Activated CD8-positive, alpha-beta memory T cell treated with anti-CD3 and anti-CD28 coated beads, Interleukin-2, amount 10 ng/mL, durations not matched to agents 7 days and 5 days (primary cell): ENCODE measurements at regions of chr15 and their contacts with region 1.

Region 1: DNA sequence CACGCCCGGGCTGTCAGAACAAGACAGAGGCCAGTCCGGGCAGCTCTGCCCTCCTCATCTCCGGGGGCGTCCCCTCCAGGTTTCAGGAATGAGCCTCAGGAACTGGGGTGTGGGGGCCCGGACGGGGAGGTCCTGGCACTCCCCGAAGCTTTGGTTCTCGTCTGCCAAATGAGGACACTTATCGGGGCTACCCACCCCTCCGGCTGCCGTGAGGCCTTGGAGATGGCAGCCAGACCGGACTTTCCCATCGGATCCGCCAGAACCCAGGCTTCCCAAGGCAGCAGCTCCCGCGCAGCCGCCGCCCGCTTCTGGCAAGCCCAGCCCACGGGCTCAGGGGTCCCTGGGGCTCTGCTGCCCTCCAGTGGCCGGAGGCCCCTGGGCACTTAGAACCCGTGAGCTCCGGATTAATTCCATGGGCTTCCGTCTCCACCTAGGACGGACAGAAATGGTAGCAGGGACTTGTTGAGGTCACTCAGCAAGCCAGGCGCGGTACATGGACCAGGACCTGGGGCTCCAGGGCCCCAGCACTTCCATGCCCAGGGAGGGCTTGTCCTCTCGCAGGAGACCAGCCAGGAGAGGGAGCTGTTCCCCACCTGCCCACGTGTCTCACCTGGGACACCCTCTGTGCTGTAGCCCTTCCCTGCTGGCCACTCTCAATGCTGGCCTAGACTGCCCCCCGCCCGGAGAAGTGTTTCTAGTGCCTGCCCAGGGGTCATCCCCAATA is 89.4 kb downstream of the LINGO1 start:
- DNase-seq: peak; percentile 83
- ATAC-seq: peak; percentile 93
- H3K4me3 Mint-ChIP-seq: peak overlapping the region; percentile 68
- H3K27ac Mint-ChIP-seq: no peak overlapping the region
- H3K4me1 Mint-ChIP-seq: peaks cover 16% of the 10 kb centered on the region
- H3K27me3 Mint-ChIP-seq: peaks cover 1% of the 10 kb centered on the region

Region 2: DNA sequence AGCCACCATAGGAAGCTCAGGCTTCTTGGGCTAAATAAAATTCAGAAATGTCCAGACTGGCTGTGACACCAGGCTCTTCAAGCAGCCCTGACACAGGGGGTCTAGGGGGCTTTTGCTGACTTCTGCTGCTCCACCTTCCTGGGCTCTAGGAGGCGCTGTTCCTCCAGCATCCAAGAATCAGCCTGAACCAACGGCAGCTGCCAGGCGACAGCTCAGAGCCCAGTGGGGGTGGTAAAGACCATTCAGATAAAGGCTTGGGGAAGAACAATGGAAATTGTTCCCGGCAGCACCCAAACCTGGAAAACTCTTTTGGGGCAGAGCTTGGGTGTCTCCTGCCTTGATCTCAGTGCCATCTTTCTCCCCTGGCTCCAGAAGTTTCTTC is 570.0 kb before region 1 on chr15:
- CTCF ChIA-PET with region 1: interaction called, 36 read pairs
- DNase-seq: peak; percentile 81
- ATAC-seq: peak; percentile 71
- H3K4me3 Mint-ChIP-seq: no peak overlapping the region
- H3K27ac Mint-ChIP-seq: no peak overlapping the region
- H3K4me1 Mint-ChIP-seq: peaks cover 34% of the 10 kb centered on the region
- H3K27me3 Mint-ChIP-seq: no peaks in the 10 kb centered on the region

Region 3: GRCh38 chr15:77107531-77108355 is 435.6 kb before region 1 on chr15:
- CTCF ChIA-PET with region 1: interaction called, 50 read pairs
- DNase-seq: peak; percentile 66
- ATAC-seq: peak; percentile 69
- H3K4me3 Mint-ChIP-seq: no peak overlapping the region
- H3K27ac Mint-ChIP-seq: no peak overlapping the region
- H3K4me1 Mint-ChIP-seq: no peaks in the 10 kb centered on the region
- H3K27me3 Mint-ChIP-seq: no peaks in the 10 kb centered on the region

Region 4: GRCh38 chr15:77126529-77127326 is 416.6 kb before region 1 on chr15:
- CTCF ChIA-PET with region 1: interaction called, 12 read pairs
- DNase-seq: no peak
- ATAC-seq: no peak
- H3K4me3 Mint-ChIP-seq: no peak overlapping the region
- H3K27ac Mint-ChIP-seq: no peak overlapping the region
- H3K4me1 Mint-ChIP-seq: peaks cover 10% of the 10 kb centered on the region
- H3K27me3 Mint-ChIP-seq: no peaks in the 10 kb centered on the region

Region 5: DNA sequence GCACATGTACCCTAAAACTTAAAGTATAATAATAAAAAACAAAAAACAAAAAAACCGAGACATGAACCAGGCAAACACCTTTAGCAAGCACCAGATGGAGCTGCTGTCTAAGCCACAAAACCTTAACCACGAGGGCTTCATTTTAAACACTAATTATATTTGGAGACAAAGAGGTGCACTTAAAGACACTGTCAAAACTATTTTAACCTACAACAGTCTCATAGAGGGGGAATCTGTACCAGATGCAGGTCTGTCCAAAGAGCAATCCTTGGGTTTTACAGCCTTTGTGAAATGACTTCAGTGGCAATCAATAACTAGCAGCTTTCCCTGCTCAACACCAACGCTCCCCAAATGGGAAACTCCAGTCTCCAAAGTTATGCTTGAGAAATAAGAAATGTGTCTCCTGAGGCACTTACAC is 356.7 kb before region 1 on chr15:
- CTCF ChIA-PET with region 1: interaction called, 71 read pairs
- DNase-seq: peak; percentile 45
- ATAC-seq: no peak
- H3K4me3 Mint-ChIP-seq: no peak overlapping the region
- H3K27ac Mint-ChIP-seq: no peak overlapping the region
- H3K4me1 Mint-ChIP-seq: peaks cover 47% of the 10 kb centered on the region
- H3K27me3 Mint-ChIP-seq: no peaks in the 10 kb centered on the region

Region 6: GRCh38 chr15:77496710-77497103 is 46.6 kb before region 1 on chr15:
- CTCF ChIA-PET with region 1: interaction called, 18 read pairs
- DNase-seq: peak; percentile 78
- ATAC-seq: peak; percentile 72
- H3K4me3 Mint-ChIP-seq: no peak overlapping the region
- H3K27ac Mint-ChIP-seq: no peak overlapping the region
- H3K4me1 Mint-ChIP-seq: peaks cover 12% of the 10 kb centered on the region
- H3K27me3 Mint-ChIP-seq: no peaks in the 10 kb centered on the region

Region 7: GRCh38 chr15:77531146-77531962 is 12.0 kb before region 1 on chr15:
- CTCF ChIA-PET with region 1: interaction called, 12 read pairs
- DNase-seq: no peak
- ATAC-seq: no peak
- H3K4me3 Mint-ChIP-seq: no peak overlapping the region
- H3K27ac Mint-ChIP-seq: no peak overlapping the region
- H3K4me1 Mint-ChIP-seq: no peaks in the 10 kb centered on the region
- H3K27me3 Mint-ChIP-seq: peaks cover 9% of the 10 kb centered on the region

Region 8: DNA sequence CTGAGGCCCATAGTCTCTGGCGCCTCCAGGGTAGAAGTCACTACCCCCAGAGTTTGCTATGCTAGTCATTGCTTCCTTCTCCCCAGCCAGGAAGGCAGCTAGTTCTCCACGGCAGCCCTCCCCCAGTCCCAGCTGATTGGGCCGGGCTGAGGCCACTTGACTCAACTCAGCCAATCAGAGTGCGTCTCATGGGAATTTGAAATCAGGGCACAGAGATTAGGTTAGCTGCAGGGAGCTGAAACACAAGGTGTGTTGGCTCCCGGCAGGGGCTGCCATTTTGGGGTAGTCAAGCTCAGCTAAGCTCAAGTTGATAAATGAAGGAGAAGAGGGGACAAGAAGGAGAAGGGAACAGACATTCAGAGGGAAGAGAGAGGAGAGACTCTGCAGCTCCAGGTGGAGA is 56.6 kb after region 1 on chr15:
- CTCF ChIA-PET with region 1: no interaction called
- DNase-seq: no peak
- ATAC-seq: no peak
- H3K4me3 Mint-ChIP-seq: no peak overlapping the region
- H3K27ac Mint-ChIP-seq: no peak overlapping the region
- H3K4me1 Mint-ChIP-seq: peaks cover 4% of the 10 kb centered on the region
- H3K27me3 Mint-ChIP-seq: peaks cover 10% of the 10 kb centered on the region